Heart right ventricle (tissue), 16 donors: ENCODE measurements at regions of chr4 and their contacts with region 1.

Region 1: DNA sequence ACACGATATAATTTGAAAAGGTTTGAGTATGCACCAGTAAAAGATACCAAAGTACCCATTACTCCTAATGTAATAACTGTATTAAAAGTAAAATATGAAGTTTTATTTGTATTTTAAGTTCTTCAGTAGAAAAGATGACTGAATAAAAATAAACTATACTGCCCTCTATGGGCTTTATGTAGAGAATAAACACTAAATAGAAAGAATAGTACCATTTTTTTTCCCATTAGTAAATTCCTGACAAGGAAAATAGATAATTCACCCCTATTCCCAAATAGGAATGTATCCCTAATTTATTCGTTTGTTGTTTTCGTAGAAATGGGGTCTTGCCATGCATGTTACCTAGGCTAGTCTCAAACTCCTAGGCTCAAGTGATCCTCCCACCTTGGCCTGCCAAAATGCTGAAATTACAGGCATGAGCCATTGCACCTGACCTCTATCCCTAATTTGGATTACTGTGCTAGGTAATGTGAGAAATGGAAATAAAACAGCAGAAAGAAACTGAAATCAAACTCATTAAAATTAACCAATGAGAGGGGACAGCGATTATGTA is 73.6 kb upstream of the COX18 start:
- DNase-seq: no peak
- ATAC-seq: no peak
- H3K4me3 ChIP-seq: no peak overlapping the region
- H3K27ac ChIP-seq: no peak overlapping the region
- H3K4me1 ChIP-seq: peaks cover 0 to 6% (median 0%) of the 10 kb centered on the region in 9 donors
- H3K27me3 ChIP-seq: no peaks in the 10 kb centered on the region
- CTCF ChIP-seq: peak in 7 of 9 donors; percentile 7 to 49 (median 19)

Region 2: DNA sequence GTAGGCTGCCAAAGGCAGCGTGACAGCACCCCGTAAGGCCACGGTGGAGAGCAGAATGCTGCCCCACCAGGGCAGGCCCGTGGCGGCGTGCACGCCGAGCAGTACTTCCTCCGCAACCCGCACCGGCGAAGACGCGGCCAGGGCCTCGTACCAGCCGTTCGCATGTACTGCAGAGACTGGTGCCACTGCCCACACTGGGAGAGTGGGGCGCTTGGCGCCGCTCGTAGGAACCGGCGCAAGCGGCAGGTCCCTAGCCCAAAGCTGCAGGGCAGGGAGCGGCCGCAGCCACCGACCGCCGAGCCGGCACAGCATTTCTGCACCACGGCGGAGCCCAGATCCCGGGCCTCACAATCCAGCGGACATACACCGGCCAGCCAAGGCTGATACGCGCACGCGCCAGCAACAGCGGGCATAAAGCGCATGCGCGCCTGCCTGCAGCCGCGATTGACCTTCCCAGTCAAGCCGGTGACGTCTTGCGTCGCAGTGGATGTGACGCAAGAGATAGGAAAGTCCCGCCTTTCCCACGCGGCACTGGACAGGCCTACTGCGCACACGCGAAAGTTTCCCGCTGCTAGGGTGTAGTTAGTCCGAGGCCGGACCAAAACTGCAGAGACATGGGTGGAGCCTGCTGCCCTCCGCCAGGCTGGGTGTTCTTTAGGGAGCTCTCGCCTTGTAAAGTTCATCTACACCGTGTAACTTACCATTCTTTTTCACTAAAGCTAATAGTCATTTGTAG is 73.6 kb before region 1 on chr4 and contains the start of gene COX18:
- intact Hi-C with region 1: loop called in 1 of 10 experiments (anchors 10 kb)
- DNase-seq: peak; percentile 97 to 98
- ATAC-seq: peak; percentile 97 to 99 (median 98)
- H3K4me3 ChIP-seq: peak within 1 kb of the TSS; percentile 62 to 99 (median 78)
- H3K27ac ChIP-seq: peak within 1 kb of the TSS; percentile 86 to 99 (median 94)
- H3K4me1 ChIP-seq: peaks cover 0 to 39% (median 29%) of the 10 kb centered on the region in 9 donors
- H3K27me3 ChIP-seq: no peaks in the 10 kb centered on the region
- CTCF ChIP-seq: peak in 1 of 9 donors; percentile 7
- total RNA-seq, gene COX18: 16.8 to 22.3 (median 18.1) TPM

Region 3: GRCh38 chr4:73099143-73099542 is 43.9 kb before region 1 on chr4:
- intact Hi-C with region 1: loop called in 2 of 10 experiments (anchors 10 kb)
- DNase-seq: no peak
- ATAC-seq: peak in 6 of 8 donors; percentile 15 to 57 (median 31)
- H3K4me3 ChIP-seq: no peak overlapping the region
- H3K27ac ChIP-seq: no peak overlapping the region
- H3K4me1 ChIP-seq: no peaks in the 10 kb centered on the region
- H3K27me3 ChIP-seq: no peaks in the 10 kb centered on the region
- CTCF ChIP-seq: no peak

Region 4: DNA sequence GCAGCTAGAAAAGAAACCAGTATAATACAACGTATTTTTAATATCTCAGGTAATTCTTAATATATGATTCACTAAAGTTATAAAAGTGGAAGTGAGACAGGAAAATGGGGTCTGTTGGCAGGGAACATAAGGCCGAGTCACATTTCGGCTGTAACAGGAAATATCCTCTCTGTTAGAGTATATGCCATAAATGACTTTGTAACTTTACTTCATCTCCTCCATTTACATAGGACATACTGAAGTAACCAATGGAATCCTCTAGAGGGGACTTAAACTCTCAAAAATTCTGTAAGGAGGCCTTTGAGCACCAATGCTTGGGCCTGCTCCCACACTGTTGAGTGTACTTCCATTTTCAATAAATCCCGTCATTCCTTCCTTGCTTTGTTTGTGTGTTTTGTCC is 44.3 kb after region 1 on chr4:
- intact Hi-C with region 1: no loop called
- DNase-seq: no peak
- ATAC-seq: peak in 2 of 8 donors; percentile 17 to 24
- H3K4me3 ChIP-seq: no peak overlapping the region
- H3K27ac ChIP-seq: peak overlapping the region in 2 of 10 donors; percentile 39 to 45
- H3K4me1 ChIP-seq: peaks cover 0 to 31% (median 14%) of the 10 kb centered on the region in 9 donors
- H3K27me3 ChIP-seq: no peaks in the 10 kb centered on the region
- CTCF ChIP-seq: no peak